Left colon (tissue), 2 donors: ENCODE measurements at regions of chr20 and their contacts with region 1.

Region 1: GRCh38 chr20:11544029-11544678 is 373.5 kb upstream of the BTBD3 start:
- DNase-seq: peak in 1 of 2 donors; percentile 11
- ATAC-seq: peak; percentile 68

Region 2: GRCh38 chr20:10476319-10476724 is 1067.8 kb before region 1 on chr20:
- intact Hi-C with region 1: loop called in 1 of 2 experiments (anchors 10 kb)
- DNase-seq: no peak
- ATAC-seq: no peak

Region 3: GRCh38 chr20:10553326-10553984 is 990.7 kb before region 1 on chr20:
- intact Hi-C with region 1: loop called in 1 of 2 experiments (anchors 10 kb)
- DNase-seq: peak; percentile 50 to 77
- ATAC-seq: peak; percentile 83

Region 4: GRCh38 chr20:10673988-10674711 is 870.0 kb before region 1 on chr20 and contains the start of gene JAG1:
- intact Hi-C with region 1: loop called in 1 of 2 experiments (anchors 10 kb)
- DNase-seq: peak; percentile 95 to 97
- ATAC-seq: peak; percentile 72
- total RNA-seq, gene JAG1: 78.8 to 170 TPM